ENCODE measurements at regions of chr20 and their contacts with region 1.

Region 1: GRCh38 chr20:22339091-22339881 is 245.1 kb downstream of the FOXA2 start:
- DNase-seq: peak in 2 of 4 donors; percentile 58 to 80
- ATAC-seq: peak; percentile 88
- H3K4me3 ChIP-seq: no peak overlapping the region
- H3K27ac ChIP-seq: no peak overlapping the region
- H3K4me1 ChIP-seq: peaks cover 0 to 5% of the 10 kb centered on the region in 2 donors
- H3K27me3 ChIP-seq: peaks cover 0 to 8% of the 10 kb centered on the region in 2 donors
- CTCF ChIP-seq: peak; percentile 67 to 68

Region 2: DNA sequence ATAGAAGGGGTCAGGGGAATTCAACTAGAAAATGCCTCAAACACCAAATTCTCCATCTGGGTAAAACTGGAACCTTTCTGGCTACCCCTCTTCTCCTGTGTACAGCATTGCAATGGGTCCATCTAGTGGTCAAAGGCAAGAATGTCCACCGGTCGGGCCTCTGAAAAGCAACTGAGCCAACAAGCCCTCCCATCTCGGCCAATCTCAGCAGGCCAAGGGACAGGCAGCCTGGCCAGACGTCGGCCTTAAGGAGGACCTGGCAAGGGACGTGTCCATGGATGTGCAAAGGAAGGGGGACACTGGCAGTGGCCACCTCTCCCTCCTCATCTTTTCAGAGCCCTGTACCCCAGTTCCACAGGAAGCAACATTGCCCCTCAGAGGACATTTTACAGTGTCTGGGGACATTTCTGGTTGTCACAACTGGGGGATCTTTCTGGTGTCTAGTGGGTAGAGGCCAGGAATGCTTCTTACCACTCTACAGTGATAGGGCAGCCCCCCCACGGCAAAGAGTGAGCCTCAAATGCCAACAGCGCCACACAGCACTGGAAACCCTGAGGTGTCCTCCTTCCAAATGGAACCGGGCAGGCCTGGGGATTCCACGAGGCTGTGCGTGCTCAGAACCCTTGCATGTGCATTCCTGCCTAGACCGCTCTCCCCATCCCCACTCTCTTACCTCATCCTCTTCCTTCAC is 344.9 kb after region 1 on chr20:
- intact Hi-C with region 1: loop called (anchors 2 to 10 kb)
- DNase-seq: peak in 2 of 4 donors; percentile 67 to 83
- ATAC-seq: peak; percentile 87
- H3K4me3 ChIP-seq: no peak overlapping the region
- H3K27ac ChIP-seq: peak overlapping the region in 1 of 2 donors; percentile 13
- H3K4me1 ChIP-seq: peaks cover 0 to 28% of the 10 kb centered on the region in 2 donors
- H3K27me3 ChIP-seq: no peaks in the 10 kb centered on the region
- CTCF ChIP-seq: peak; percentile 84 to 87

Region 3: GRCh38 chr20:23340524-23340923 is 1001.2 kb after region 1 on chr20:
- intact Hi-C with region 1: loop called in 1 of 2 experiments (anchors 5 kb)
- DNase-seq: peak in 3 of 4 donors; percentile 53 to 81 (median 54)
- ATAC-seq: peak; percentile 92
- H3K4me3 ChIP-seq: no peak overlapping the region
- H3K27ac ChIP-seq: no peak overlapping the region
- H3K4me1 ChIP-seq: no peaks in the 10 kb centered on the region
- H3K27me3 ChIP-seq: no peaks in the 10 kb centered on the region
- CTCF ChIP-seq: peak; percentile 51 to 71